Aorta (tissue), 5 donors: ENCODE measurements at regions of chr18 and their contacts with region 1.

Region 1: DNA sequence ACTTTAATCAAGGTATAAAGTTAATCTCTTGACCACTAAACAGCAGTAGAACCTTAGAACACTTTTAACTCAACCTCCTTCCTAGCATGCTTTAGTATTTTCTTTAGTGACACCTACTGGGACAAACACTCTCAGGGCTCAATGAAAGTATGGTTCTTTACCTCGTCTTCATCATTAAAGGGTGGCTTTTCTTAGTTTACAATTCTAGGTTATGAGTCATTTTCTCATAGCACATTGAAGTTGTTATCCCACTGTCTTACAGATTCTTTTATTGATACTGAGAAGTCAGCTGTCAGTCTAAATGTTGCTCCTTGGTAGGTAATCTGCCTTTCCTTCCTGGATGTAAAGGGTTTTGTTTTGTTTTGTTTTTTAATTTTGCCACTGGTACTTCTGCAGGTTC is 38.0 kb downstream of the SIGLEC15 start:
- DNase-seq: no peak
- ATAC-seq: no peak
- H3K4me3 ChIP-seq: no peak overlapping the region
- H3K27ac ChIP-seq: no peak overlapping the region
- H3K4me1 ChIP-seq: no peaks in the 10 kb centered on the region
- H3K27me3 ChIP-seq: no peaks in the 10 kb centered on the region

Region 2: DNA sequence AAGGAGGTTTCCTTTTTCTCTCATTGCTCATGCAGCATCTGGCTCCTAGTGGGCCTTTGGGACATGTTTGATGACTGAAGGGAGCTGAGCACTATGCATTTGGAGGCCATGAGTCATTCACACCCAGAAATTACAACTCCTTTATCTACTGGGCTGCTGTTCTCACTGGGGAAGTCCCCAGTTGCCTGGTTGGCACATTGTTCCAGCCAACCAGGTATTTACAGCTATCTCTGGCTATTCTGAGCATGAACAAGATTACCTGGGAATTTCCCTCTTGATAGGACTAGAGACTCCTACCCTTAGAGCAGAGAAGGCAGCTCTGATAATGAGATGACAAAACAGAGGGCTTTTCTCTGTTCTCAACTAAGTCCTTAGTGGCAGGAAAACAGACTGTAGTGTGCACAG is 976.2 kb before region 1 on chr18:
- intact Hi-C with region 1: loop called in 1 of 2 experiments (anchors 10 kb)
- DNase-seq: no peak
- ATAC-seq: peak; percentile 33
- H3K4me3 ChIP-seq: no peak overlapping the region
- H3K27ac ChIP-seq: no peak overlapping the region
- H3K4me1 ChIP-seq: peaks cover 2 to 8% of the 10 kb centered on the region in 2 donors
- H3K27me3 ChIP-seq: no peaks in the 10 kb centered on the region